Activated T-helper 2 cell treated with anti-CD3 and anti-CD28 coated beads, Interferon-gamma antibody, Interleukin-2, Interleukin-4, amounts not matched to agents 10 μg/mL and 5 μg/mL and 100 μg/mL, durations not matched to agents 14 hours and 24 hours and 36 hours (primary cell): ENCODE measurements at regions of chr3 and their contacts with region 1.

Region 1: DNA sequence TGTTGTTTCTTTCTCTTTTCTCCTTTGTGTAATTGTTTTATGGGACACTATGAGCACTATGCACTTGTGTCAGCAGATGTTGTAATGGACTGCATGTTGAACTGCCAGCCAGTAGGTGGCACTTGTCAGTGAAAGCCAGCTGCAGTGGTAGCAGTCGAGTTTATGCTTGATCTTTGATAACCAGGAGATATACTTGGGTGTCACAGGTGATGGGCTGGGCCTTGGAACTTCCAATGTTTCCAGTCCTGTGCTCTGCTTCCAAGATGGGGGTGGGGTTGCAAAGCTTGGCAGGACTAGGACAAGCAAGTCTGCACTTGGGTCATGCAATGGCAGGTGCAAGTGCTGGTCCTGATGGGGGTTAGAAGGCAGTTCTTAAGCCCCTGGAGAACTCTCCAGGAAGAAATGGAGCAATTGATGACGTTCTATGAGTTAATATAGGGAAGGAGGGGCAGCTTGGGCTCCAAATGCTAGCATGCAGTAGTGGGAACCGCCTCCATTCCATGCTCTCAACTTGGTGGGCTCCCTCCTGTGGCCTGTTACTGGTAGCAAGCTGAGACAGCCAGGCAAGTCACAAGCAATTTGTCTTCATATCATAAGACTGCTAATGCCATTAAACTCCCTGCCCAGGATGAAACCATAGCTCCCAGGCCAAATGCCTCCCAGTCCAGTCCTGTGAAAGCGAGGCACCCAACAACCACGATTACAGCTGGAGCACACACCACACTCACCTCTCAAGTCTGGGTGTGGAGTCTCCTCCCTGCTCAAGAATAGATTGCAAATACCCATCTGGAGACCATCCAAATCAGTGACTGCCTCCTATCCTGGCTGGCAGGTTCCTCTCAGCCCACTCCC is 287.2 kb downstream of the CGGBP1 start:
- DNase-seq: no peak
- H3K4me3 Mint-ChIP-seq: no peak overlapping the region
- H3K27ac Mint-ChIP-seq: no peak overlapping the region
- H3K4me1 Mint-ChIP-seq: no peaks in the 10 kb centered on the region
- H3K27me3 Mint-ChIP-seq: peaks cover 18% of the 10 kb centered on the region

Region 2: DNA sequence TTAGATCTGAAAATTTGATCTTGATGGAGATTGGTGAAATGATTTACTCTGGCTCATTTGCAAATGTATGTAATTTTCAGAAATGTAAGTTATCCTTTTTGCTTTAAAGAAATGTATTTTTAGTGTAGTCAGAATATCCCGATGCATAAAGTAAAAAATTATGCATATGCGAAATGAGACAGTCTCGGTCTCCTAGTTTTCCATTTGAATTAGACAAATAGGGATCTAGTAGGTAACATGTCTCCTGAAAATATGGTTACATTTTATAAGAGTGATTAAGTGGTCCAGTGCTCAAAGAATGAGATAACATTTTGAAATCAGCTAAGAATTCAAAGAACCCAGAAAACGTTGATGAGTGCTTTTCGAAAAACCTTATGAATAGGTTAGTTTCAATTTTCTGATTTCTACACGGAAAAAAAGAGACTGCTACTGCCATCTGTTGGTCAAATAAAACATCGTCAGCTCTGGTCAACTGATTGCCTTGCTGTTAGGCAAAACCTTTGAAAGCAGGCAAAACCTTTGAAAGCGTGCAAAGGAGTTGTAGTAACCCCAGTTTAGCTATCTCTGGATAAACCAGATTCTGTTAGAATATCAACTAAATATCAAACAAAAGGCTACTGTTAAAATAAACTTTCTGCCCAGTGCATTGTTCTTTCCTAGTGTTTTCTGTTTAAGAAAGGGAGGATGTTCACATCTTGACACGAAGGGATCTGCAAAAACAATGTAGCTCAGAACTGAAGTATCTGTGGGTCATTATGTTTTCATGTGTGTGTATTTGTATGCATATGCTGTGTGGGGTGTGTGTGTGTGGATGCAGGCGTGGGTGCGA is 603.7 kb before region 1 on chr3:
- intact Hi-C with region 1: no loop called
- DNase-seq: no peak
- H3K4me3 Mint-ChIP-seq: peak overlapping the region; percentile 2
- H3K27ac Mint-ChIP-seq: no peak overlapping the region
- H3K4me1 Mint-ChIP-seq: peaks cover 3% of the 10 kb centered on the region
- H3K27me3 Mint-ChIP-seq: peaks cover 10% of the 10 kb centered on the region

Region 3: DNA sequence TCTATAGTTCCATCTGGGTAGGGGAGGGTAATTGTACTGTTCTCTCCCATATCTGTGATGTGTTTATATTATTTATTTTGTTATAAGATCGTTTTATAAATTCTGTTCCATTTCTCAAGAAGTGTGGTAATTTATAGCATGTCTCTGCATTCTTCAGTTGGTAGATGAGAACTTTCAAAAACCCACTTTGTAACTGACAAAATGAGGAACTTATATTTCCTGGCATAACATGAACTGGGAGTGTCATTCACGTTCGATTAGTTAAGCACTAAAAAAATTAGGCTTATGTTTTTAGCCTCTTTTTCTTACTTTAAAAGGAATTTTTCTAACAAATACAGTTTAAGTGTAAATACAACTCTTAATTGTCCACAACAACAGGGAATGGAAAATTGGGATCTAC is 56.5 kb after region 1 on chr3:
- intact Hi-C with region 1: no loop called
- DNase-seq: no peak
- H3K4me3 Mint-ChIP-seq: no peak overlapping the region
- H3K27ac Mint-ChIP-seq: no peak overlapping the region
- H3K4me1 Mint-ChIP-seq: no peaks in the 10 kb centered on the region
- H3K27me3 Mint-ChIP-seq: no peaks in the 10 kb centered on the region

Region 4: DNA sequence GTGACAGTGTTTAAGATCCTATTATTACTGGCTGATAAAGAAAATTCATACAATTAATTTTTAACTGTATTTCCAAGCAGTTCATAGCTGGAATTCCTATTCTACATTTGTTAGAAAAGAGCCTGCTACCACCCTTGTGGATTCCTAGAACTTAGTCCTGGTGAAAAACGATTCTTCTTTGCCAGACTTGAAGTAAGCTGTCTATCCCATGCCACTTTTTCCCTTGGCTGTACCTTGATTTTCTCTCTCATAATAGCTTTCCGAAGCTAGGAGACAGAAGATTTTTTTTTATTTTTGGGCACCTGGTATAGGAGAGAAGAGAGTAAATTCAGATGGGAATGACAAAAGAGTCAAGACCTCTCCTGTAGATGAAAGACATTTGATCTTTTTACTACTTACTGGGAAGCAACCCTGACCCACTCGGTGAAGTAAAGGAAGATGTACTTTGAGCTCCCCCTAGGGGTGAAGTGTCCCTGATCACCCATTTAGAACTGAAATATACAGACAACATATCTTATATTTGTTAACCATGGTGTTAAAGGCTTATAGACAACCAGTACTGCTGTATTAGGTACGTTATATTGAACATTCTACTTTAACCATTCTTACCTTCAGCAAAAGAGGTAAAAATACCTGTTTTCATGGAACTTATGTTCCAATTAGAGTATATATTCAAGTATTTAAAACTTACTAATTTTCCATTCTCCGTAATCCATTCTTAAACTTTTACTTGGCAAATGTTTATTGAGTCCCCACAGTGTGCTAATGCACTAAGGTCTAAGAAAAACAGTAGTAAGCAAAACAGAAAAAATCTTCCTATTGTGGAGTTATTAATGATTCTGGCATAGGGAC is 342.0 kb after region 1 on chr3:
- intact Hi-C with region 1: loop called (anchors 2 kb)
- DNase-seq: peak; percentile 27
- H3K4me3 Mint-ChIP-seq: no peak overlapping the region
- H3K27ac Mint-ChIP-seq: no peak overlapping the region
- H3K4me1 Mint-ChIP-seq: peaks cover 23% of the 10 kb centered on the region
- H3K27me3 Mint-ChIP-seq: no peaks in the 10 kb centered on the region

Region 5: DNA sequence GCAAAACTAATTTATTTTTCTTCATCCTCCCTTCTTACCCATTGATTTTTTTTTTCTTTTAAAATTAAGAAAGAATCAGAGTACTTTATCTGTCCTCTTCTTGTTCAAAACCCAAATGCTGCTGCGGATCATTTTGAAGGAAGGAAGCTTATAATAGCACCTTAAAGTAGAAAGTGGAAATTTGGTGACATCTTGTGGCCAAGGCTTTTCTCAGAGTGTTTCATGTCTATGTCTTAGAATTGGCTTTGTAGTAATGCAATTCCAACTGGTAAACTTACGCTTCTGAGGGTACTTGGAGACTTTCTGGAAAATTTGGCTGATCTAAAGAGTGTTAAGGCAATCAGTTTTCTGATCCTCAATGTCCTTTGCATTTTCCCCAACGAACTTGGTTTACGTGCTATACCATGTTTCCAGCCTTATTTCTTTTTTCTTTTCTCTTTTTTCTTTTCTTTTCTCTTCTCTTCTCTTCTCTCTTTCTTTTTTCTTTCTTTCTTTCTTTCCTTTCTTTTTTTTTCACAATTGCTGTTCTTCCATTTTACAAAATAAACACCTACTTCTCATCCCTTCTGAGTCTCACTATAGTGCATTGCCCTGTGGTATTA is 408.9 kb after region 1 on chr3:
- intact Hi-C with region 1: loop called (anchors 1 kb)
- DNase-seq: no peak
- H3K4me3 Mint-ChIP-seq: no peak overlapping the region
- H3K27ac Mint-ChIP-seq: no peak overlapping the region
- H3K4me1 Mint-ChIP-seq: no peaks in the 10 kb centered on the region
- H3K27me3 Mint-ChIP-seq: peaks cover 6% of the 10 kb centered on the region